ENCODE measurements at regions of chr2 and their contacts with region 1.

Region 1: DNA sequence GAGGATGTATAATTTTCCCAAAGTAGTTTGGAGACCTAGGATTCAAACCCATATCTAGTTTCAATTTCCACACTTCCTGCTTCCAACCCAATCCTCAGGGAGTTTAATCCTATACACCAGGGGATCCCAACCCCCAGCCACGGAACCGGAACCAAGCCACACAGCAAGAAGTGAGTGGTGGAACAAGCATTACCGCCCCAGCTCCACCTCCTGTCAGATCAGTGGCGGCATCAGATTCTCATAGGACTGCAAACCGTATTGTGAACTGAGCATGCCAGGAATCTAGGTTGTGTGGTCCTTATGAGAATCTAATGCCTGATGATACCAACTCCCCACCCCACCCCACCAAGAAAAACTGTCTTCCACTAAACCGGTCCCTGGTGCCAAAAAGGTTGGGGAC is 52.6 kb downstream of the PRPF40A start:
- DNase-seq: no peak
- ATAC-seq: no peak
- H3K4me3 Mint-ChIP-seq: no peak overlapping the region
- H3K27ac Mint-ChIP-seq: no peak overlapping the region
- H3K4me1 Mint-ChIP-seq: no peaks in the 10 kb centered on the region
- H3K27me3 Mint-ChIP-seq: no peaks in the 10 kb centered on the region

Region 2: GRCh38 chr2:152251211-152251610 is 413.5 kb before region 1 on chr2:
- CTCF ChIA-PET with region 1: no interaction called
- POLR2A ChIA-PET with region 1: no interaction called
- intact Hi-C with region 1: no loop called
- DNase-seq: no peak
- ATAC-seq: no peak
- H3K4me3 Mint-ChIP-seq: no peak overlapping the region
- H3K27ac Mint-ChIP-seq: no peak overlapping the region
- H3K4me1 Mint-ChIP-seq: no peaks in the 10 kb centered on the region
- H3K27me3 Mint-ChIP-seq: peaks cover 23% of the 10 kb centered on the region

Region 3: DNA sequence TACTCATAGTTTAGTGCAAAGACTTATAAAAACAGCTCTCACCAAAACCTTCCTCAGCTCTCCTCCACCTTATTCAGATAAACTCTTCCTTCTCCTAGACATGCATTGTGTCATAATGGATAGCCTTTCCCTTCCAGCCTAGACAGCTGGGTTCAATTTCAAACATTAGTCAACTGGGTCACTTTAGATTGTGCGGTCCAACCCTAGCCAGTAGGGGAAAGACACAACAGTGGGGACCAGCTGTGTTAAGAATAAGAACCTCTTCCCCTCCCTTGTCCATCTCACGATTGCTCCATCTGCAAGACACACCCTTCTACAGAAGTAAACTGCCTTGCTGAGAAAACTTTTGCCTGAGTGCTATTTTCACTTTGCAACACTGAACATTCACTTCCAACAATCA is 44.0 kb after region 1 on chr2:
- CTCF ChIA-PET with region 1: interaction called, 3 read pairs
- POLR2A ChIA-PET with region 1: no interaction called
- intact Hi-C with region 1: loop called in 1 of 2 experiments (anchors 2 kb)
- DNase-seq: no peak
- ATAC-seq: no peak
- H3K4me3 Mint-ChIP-seq: no peak overlapping the region
- H3K27ac Mint-ChIP-seq: no peak overlapping the region
- H3K4me1 Mint-ChIP-seq: peaks cover 65% of the 10 kb centered on the region
- H3K27me3 Mint-ChIP-seq: no peaks in the 10 kb centered on the region

Region 4: DNA sequence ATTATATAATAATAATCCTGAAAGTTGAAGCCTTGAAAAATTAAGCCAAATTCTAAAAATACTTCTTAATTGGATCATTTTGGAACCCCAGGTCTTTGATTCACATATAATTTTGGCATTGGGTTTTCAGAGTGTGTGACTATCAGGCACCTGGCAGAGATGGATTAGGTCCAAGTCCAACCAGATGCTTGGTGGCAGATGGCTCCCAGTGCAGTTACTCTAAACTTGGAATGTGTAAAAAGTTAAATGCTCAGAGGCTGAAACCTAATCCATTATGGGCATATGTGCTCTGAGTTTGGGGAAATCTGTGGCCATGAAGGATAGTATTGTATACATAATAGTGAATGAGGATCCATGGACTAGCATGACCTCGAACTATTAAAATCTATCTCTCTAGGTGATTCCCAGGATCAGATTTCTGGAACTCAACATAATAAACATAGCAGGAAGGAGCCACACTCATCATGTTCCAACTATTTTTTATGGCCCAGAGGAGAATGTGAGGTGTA is 480.8 kb after region 1 on chr2:
- CTCF ChIA-PET with region 1: no interaction called
- POLR2A ChIA-PET with region 1: no interaction called
- intact Hi-C with region 1: no loop called
- DNase-seq: no peak
- ATAC-seq: no peak
- H3K4me3 Mint-ChIP-seq: no peak overlapping the region
- H3K27ac Mint-ChIP-seq: no peak overlapping the region
- H3K4me1 Mint-ChIP-seq: no peaks in the 10 kb centered on the region
- H3K27me3 Mint-ChIP-seq: no peaks in the 10 kb centered on the region

Measured in activated CD4-positive, alpha-beta T cell treated with anti-CD3 and anti-CD28 coated beads for 36 hours (primary cell).